ENCODE measurements at regions of chr1 and their contacts with region 1.

Region 1: DNA sequence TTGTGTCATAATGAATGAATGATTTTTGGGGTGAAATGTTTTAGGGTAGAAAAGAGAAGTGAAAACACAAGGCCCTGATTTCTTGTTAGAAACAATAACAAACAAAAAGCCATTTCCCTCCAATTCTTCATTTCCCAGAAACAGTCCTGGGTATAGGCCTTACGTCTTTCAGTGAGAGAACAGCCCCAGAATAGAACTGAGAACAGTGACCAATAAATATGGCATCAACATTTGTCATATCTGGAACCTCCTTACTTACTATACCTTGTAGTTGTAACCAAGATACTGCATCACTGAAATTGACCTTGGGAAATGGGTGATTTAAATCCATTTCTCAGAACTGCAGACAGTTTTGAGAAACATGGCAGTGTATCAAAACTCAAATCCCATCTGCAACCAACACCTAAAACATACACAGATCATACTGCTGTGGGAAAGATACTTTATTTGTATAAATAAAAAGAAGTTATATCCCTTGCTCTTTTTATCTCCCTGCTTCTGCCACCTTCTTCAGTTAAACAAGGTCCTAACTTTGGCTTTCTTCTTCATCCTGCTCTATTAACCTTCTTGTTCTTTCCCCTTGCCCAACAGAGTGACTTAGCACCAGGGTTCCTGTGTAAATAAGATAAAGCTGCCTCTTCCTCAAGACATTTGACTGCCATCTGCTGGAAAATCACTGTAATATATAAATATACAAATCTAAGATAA is 19.5 kb downstream of the XKR8 start:
- DNase-seq: peak; percentile 65

Region 2: DNA sequence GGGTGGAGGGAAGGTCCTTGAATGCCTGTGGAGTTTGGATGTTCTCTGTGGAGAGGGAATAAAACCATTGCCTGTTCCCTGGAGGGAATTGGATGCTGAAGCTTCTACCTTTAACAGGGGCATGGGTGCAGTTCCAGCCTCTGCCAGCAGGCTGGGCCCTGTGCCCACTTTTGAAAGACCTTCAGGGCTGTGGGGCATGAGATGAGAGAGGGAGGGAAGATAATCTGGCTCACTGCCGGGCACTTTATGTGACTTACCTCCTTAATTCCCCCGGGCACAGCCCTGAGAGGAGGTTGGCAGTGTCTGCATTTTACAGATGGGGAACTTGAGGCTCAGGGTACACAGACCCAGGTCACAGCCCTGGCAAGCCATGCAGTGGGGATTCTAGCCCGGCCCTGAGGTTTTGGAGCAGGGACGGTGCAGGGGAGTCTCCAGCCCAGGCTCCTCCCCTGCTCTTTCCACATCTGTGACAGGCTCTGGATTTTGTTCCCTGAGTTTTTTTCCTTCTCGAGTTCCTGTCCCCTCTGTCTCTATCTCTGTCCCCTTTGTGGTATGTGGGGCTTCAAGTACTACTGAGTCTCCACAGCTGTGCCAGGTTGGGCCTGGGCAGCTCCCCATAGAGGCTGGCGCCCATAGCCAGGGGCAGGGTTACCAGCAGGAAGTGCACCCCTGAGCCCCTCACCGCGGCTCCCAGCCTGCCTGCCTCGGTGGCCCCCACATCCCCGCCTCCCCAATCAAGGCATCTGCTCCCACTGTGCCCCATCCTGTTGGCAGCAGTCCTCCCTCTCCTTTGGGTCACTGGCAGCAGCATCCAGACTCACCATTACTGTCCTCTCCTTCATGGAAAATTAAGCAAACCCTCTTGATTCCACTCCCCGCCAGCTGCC is 121.0 kb before region 1 on chr1:
- in situ Hi-C with region 1: loop called (anchors 25 kb)
- DNase-seq: peak; percentile 89

Region 3: GRCh38 chr1:28401760-28402159 is 422.5 kb after region 1 on chr1:
- in situ Hi-C with region 1: no loop called
- DNase-seq: no peak

Measured in KBM-7 (cell line).